CD4-positive, alpha-beta memory T cell (primary cell): ENCODE measurements at regions of chr2 and their contacts with region 1.

Region 1: GRCh38 chr2:20015472-20016083 is 3.1 kb upstream of the MATN3 start:
- DNase-seq: peak in 4 of 5 donors; percentile 31 to 46 (median 35)
- H3K4me3 ChIP-seq: no peak overlapping the region
- H3K4me3 Mint-ChIP-seq: no peak overlapping the region
- H3K27ac ChIP-seq: no peak overlapping the region
- H3K27ac Mint-ChIP-seq: peak overlapping the region in 1 of 7 donors; percentile 38
- H3K4me1 ChIP-seq: peaks cover 12% of the 10 kb centered on the region
- H3K4me1 Mint-ChIP-seq: peaks cover 5 to 14% (median 10%) of the 10 kb centered on the region in 4 donors
- H3K27me3 ChIP-seq: peaks cover 19% of the 10 kb centered on the region
- H3K27me3 Mint-ChIP-seq: peaks cover 22 to 23% of the 10 kb centered on the region in 2 donors

Region 2: DNA sequence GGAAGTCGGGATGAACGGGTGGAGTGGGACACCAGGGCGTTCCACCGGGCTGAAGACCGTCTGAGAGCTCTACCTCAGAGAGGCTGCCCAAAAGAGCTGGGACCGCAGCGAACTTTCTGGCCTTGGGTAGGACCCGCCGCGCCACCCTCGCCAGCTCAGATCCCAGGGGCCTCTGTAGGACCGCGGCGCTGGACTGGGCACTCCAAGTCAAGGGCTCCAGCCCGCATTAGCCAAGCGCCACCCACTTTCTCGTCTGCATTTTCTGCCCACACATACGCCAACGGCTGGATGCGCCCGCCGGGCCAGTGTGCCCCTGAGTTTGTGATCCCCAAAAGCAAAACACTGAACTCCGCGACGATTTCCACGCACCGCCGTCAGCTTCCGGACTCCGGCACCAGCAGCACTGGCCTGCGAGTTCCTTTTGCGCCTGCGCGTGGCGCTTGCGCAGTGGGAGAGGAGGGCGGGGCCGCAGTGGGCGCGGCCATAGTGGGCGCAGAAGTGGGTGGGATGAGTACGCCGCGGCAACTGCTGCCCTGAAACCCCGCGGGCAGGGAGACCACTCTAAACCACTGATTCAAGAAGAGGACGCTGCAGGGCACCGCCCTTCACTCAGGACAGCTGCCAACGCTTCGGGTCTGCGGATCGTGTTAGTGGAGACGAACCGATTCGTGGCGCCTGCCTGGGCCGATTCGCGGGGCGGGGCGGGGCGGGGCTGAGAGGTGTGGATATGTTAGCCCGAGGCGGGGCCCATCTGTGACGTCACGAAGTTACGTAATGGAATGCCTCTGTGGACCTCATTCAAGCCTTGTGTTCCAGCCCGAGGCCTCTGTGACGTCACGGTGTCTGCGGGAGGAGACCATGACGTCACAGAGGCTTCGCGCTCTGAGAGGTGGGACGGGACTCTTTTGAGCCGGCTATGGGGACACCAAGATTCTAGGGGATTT is 667.7 kb before region 1 on chr2:
- CTCF ChIA-PET with region 1: no interaction called
- POLR2A ChIA-PET with region 1: no interaction called
- intact Hi-C with region 1: no loop called
- DNase-seq: peak; percentile 97 to 100 (median 98)
- H3K4me3 ChIP-seq: peak overlapping the region; percentile 72 to 83
- H3K4me3 Mint-ChIP-seq: peak overlapping the region; percentile 96 to 99 (median 98)
- H3K27ac ChIP-seq: peak overlapping the region; percentile 92
- H3K27ac Mint-ChIP-seq: peak overlapping the region; percentile 97 to 100 (median 98)
- H3K4me1 ChIP-seq: peaks cover 38% of the 10 kb centered on the region
- H3K4me1 Mint-ChIP-seq: peaks cover 13 to 45% (median 29%) of the 10 kb centered on the region in 4 donors
- H3K27me3 ChIP-seq: peaks cover 23% of the 10 kb centered on the region
- H3K27me3 Mint-ChIP-seq: peaks cover 24 to 35% of the 10 kb centered on the region in 2 donors

Region 3: DNA sequence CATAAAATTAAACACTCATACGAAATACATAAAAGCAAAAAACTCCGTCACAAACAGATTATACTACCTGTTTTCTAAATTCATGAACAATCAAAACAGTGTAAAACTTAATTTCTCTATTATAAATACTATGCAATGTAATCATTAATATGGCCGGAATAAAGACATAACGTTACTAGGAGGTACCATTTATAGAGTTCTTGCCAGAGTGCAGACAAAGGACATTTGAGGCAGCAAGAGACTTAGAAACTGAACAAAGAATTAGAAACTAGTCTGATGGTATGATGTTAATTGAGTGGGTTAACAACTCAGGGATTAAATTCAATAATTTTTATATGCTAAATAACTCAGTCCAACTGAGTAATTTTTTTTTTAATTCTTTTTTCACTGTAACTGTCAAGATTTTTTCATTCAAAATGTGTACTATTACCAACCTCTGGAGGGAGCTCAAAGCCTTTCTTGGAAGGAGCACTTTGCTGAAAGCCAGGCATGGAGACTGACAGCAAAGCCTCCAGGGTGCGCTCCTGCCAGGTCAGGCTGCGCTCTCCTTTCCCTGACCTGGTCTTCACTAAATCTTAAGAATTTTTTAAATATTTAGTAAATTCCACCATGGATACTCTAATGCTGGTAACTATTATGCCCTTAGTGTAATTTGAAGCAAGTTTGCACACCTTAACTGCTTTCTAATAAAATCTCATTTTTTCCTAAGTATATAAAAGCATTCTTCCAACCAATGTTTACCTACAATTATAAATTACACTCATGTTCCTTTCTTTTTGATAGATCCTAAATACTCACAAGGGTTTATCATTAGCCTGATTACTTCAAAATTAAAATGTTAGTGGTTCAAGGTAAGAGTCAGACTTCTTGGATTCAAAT is 59.8 kb before region 1 on chr2:
- CTCF ChIA-PET with region 1: interaction called, 10 read pairs
- POLR2A ChIA-PET with region 1: no interaction called
- intact Hi-C with region 1: no loop called
- DNase-seq: peak; percentile 41 to 60 (median 48)
- H3K4me3 ChIP-seq: no peak overlapping the region
- H3K4me3 Mint-ChIP-seq: no peak overlapping the region
- H3K27ac ChIP-seq: no peak overlapping the region
- H3K27ac Mint-ChIP-seq: no peak overlapping the region
- H3K4me1 ChIP-seq: no peaks in the 10 kb centered on the region
- H3K4me1 Mint-ChIP-seq: no peaks in the 10 kb centered on the region
- H3K27me3 ChIP-seq: no peaks in the 10 kb centered on the region
- H3K27me3 Mint-ChIP-seq: no peaks in the 10 kb centered on the region

Region 4: DNA sequence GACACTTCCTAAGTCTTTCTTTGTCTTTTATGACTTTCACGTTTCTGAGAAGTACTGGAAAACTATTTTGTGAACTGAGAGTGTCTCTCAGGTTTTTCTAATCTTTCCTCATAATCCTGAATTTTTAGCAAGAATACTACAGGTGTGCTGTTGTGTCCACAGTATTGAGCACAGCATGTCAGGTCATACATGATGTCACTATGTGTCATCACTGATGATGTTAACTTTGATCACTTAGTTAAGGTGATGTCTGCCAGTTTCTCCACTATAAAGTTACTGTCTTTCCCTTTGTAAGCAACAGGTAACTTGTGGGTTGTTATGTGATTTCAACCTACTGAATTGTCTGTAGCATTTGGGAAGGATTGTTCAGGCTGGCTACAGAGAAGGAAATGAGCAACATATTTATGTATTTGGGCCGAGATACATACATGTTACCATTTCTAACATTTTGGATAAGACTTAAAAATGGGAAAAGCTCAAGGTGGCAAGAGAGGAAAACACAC is 14.2 kb before region 1 on chr2:
- CTCF ChIA-PET with region 1: interaction called, 20 read pairs
- POLR2A ChIA-PET with region 1: interaction called, 3 read pairs
- intact Hi-C with region 1: no loop called
- DNase-seq: no peak
- H3K4me3 ChIP-seq: no peak overlapping the region
- H3K4me3 Mint-ChIP-seq: no peak overlapping the region
- H3K27ac ChIP-seq: no peak overlapping the region
- H3K27ac Mint-ChIP-seq: no peak overlapping the region
- H3K4me1 ChIP-seq: no peaks in the 10 kb centered on the region
- H3K4me1 Mint-ChIP-seq: no peaks in the 10 kb centered on the region
- H3K27me3 ChIP-seq: no peaks in the 10 kb centered on the region
- H3K27me3 Mint-ChIP-seq: peaks cover 19 to 20% of the 10 kb centered on the region in 2 donors

Region 5: DNA sequence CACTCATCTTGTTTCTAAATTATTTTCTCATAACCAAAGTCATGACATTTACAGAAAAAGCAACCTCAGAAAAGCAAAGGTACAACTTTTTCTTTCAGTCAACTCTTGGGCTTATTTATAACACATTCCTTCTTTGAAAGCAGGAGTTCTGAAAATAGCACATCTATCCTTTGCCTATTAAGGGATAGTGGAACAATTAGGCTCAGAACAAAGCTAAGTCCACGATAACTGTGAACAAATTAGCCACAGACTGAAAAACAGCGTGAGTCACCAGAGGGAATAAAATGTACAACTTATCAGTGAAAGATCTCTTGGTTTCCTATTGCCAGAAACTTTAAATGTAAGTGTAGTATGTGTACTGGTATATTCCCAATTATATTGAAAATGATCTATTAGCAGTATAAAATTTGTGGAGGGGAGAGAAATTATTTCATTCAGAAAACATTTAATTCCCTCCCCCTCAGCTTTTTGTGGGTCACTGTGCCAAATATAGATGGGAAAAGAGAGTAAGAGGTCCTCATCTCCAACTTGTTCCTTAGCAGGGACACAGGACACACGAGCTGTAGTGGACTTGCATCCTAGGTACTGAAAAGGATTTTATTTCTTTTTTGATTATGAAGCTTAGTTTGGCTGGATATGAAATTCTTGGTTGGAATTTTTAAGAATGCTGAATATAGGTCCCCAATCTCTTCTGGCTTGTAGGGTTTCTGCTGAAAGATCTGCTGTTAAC is 12.3 kb after region 1 on chr2:
- CTCF ChIA-PET with region 1: interaction called, 32 read pairs
- POLR2A ChIA-PET with region 1: no interaction called
- intact Hi-C with region 1: no loop called
- DNase-seq: no peak
- H3K4me3 ChIP-seq: no peak overlapping the region
- H3K4me3 Mint-ChIP-seq: no peak overlapping the region
- H3K27ac ChIP-seq: no peak overlapping the region
- H3K27ac Mint-ChIP-seq: no peak overlapping the region
- H3K4me1 ChIP-seq: no peaks in the 10 kb centered on the region
- H3K4me1 Mint-ChIP-seq: no peaks in the 10 kb centered on the region
- H3K27me3 ChIP-seq: no peaks in the 10 kb centered on the region
- H3K27me3 Mint-ChIP-seq: no peaks in the 10 kb centered on the region

Region 6: GRCh38 chr2:20040489-20041172 is 25.1 kb after region 1 on chr2:
- CTCF ChIA-PET with region 1: interaction called, 32 read pairs
- POLR2A ChIA-PET with region 1: no interaction called
- intact Hi-C with region 1: no loop called
- DNase-seq: no peak
- H3K4me3 ChIP-seq: no peak overlapping the region
- H3K4me3 Mint-ChIP-seq: no peak overlapping the region
- H3K27ac ChIP-seq: no peak overlapping the region
- H3K27ac Mint-ChIP-seq: no peak overlapping the region
- H3K4me1 ChIP-seq: no peaks in the 10 kb centered on the region
- H3K4me1 Mint-ChIP-seq: peaks cover 9 to 19% (median 13%) of the 10 kb centered on the region in 4 donors
- H3K27me3 ChIP-seq: no peaks in the 10 kb centered on the region
- H3K27me3 Mint-ChIP-seq: no peaks in the 10 kb centered on the region

Region 7: DNA sequence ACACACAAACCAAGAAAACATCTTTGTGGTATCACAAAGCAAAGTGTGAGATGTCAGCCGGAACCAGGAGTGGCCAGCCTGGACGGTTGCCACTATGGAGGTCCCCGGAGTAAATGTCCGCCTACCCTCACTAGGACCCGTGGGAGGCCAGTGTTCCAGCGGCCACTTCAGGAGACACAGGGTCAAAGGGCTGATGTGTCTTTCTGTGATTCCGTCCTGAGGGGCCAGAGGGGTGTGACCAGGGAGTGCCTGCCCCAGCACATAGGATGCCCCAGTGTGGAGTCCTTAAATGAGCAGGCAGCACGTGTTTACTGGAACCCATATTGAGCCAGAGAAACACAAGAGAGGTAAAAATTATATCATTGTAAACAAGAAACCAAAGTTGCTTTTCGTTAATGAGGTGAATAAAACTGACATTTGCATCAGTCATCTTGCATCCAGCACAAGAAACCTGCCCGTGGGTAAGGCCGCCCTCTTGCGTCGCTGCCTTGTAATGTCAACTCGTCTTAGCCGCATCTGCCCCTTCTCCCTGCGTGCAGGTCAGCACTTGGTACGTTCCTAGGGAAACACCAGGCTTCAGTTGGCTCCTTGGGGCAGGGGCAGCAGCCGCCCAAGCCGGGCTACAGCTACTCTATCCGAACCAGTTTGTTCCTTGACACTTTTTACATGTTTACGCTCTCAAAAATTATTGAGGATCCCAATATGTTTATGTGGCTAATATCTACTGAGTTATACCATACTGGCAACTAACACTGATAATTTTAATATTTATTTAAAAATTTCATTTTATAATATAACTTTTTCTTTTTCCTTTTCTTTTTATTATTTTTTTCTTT is 82.5 kb after region 1 on chr2:
- CTCF ChIA-PET with region 1: interaction called, 34 read pairs
- POLR2A ChIA-PET with region 1: no interaction called
- intact Hi-C with region 1: loop called (anchors 1 kb)
- DNase-seq: peak; percentile 65 to 72 (median 70)
- H3K4me3 ChIP-seq: no peak overlapping the region
- H3K4me3 Mint-ChIP-seq: no peak overlapping the region
- H3K27ac ChIP-seq: no peak overlapping the region
- H3K27ac Mint-ChIP-seq: peak overlapping the region in 1 of 7 donors; percentile 28
- H3K4me1 ChIP-seq: no peaks in the 10 kb centered on the region
- H3K4me1 Mint-ChIP-seq: peaks cover 0 to 4% (median 0%) of the 10 kb centered on the region in 4 donors
- H3K27me3 ChIP-seq: no peaks in the 10 kb centered on the region
- H3K27me3 Mint-ChIP-seq: peaks cover 10 to 14% of the 10 kb centered on the region in 2 donors